ENCODE measurements at regions of chr5 and their contacts with region 1.

Region 1: DNA sequence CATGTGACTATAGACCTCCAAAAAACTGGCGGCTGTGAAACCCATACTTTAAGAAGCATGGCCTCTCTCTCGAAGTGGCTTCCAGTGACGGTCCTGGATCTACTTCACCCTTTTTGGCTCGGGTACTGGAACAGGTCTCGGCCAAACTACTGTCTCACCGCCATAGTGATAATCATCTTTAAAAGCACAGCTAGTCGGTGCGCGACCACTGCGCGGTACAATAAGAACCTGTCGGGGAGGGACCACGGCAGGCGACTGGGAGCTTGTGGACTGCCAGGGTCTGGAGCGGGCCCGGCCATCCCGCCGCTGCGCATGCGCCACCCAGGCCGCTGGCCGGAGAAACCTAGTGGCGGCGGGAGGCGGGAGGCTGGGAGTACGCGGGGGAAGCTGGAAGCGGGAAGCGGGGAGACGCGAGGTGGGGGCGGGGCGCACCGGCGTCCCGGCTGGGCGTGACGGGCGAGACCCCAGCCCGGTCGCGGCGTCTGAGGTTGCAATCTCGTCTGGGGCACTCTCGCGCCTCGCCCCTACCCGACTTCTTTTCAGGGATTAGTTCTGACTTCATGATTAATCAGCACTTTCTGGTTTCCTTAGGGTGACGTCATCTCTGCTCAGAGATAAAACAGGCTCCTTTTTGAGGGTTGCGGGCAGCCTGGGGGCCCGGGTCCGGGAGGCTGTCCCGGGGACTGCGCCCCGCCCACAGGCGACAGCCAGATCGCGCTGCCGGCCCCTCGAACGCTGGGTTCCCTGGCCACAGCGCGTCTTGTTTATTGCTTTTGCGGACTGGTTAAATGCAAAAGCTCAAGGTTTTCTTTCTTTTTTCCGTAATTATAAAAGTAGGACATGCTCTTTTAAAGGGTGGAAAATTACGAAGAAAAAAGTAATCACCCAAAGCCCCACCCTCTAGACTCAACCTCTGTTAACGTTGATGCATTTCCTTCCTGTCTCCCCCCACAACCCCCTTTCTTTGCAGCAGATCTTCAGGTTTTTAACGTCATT is 266.8 kb downstream of the CWC27 start:
- DNase-seq: peak; percentile 92 to 96
- H3K4me3 ChIP-seq: peak overlapping the region; percentile 63
- H3K4me3 Mint-ChIP-seq: peak overlapping the region; percentile 79
- H3K27ac Mint-ChIP-seq: peak overlapping the region; percentile 84
- H3K4me1 ChIP-seq: peaks cover 7% of the 10 kb centered on the region; the same call in 1 of the 2 replicates
- H3K4me1 Mint-ChIP-seq: peaks cover 6% of the 10 kb centered on the region
- H3K27me3 ChIP-seq: no peaks in the 10 kb centered on the region
- H3K27me3 Mint-ChIP-seq: no peaks in the 10 kb centered on the region
- CTCF ChIP-seq: no peak

Region 2: GRCh38 chr5:64958757-64959391 is 76.6 kb before region 1 on chr5:
- CTCF ChIA-PET with region 1: no interaction called
- POLR2A ChIA-PET with region 1: no interaction called
- intact Hi-C with region 1: loop called (anchors 5 kb)
- DNase-seq: no peak
- H3K4me3 ChIP-seq: no peak overlapping the region
- H3K4me3 Mint-ChIP-seq: no peak overlapping the region
- H3K27ac Mint-ChIP-seq: no peak overlapping the region
- H3K4me1 ChIP-seq: peaks cover 19% of the 10 kb centered on the region
- H3K4me1 Mint-ChIP-seq: peaks cover 13% of the 10 kb centered on the region
- H3K27me3 ChIP-seq: no peaks in the 10 kb centered on the region
- H3K27me3 Mint-ChIP-seq: no peaks in the 10 kb centered on the region
- CTCF ChIP-seq: peak; percentile 40 to 48